Endothelial cell of umbilical vein (primary cell): ENCODE measurements at regions of chr2 and their contacts with region 1.

Region 1: GRCh38 chr2:132448771-132449170 is 32.2 kb downstream of the GPR39 start:
- DNase-seq: peak; percentile 26
- H3K4me3 ChIP-seq: no peak overlapping the region
- H3K27ac ChIP-seq: no peak overlapping the region
- H3K4me1 ChIP-seq: no peaks in the 10 kb centered on the region
- H3K27me3 ChIP-seq: no peaks in the 10 kb centered on the region
- CTCF ChIP-seq: peak; percentile 39 to 48
- POLR2A ChIP-seq: no peak

Region 2: GRCh38 chr2:132267105-132267497 is 181.7 kb before region 1 on chr2:
- CTCF ChIA-PET with region 1: no interaction called
- POLR2A ChIA-PET with region 1: no interaction called
- dilution Hi-C with region 1: no loop called
- intact Hi-C with region 1: loop called (anchors 1 kb)
- DNase-seq: no peak
- H3K4me3 ChIP-seq: no peak overlapping the region
- H3K27ac ChIP-seq: no peak overlapping the region
- H3K4me1 ChIP-seq: peaks cover 4% of the 10 kb centered on the region
- H3K27me3 ChIP-seq: no peaks in the 10 kb centered on the region
- CTCF ChIP-seq: no peak
- POLR2A ChIP-seq: no peak

Region 3: GRCh38 chr2:132438691-132439090 is 10.1 kb before region 1 on chr2:
- CTCF ChIA-PET with region 1: interaction called, 15 read pairs
- POLR2A ChIA-PET with region 1: no interaction called
- dilution Hi-C with region 1: no loop called
- intact Hi-C with region 1: no loop called
- DNase-seq: peak; percentile 71
- H3K4me3 ChIP-seq: no peak overlapping the region
- H3K27ac ChIP-seq: peak overlapping the region; percentile 33
- H3K4me1 ChIP-seq: peaks cover 6% of the 10 kb centered on the region
- H3K27me3 ChIP-seq: no peaks in the 10 kb centered on the region
- CTCF ChIP-seq: no peak
- POLR2A ChIP-seq: no peak